MCF 10A (cell line): ENCODE measurements at regions of chr14 and their contacts with region 1.

Region 1: GRCh38 chr14:55270832-55271565 is at the start of gene FBXO34:
- DNase-seq: peak; percentile 99
- H3K4me3 Mint-ChIP-seq: peak within 1 kb of the TSS; percentile 82
- H3K27ac Mint-ChIP-seq: peak within 1 kb of the TSS; percentile 92
- H3K4me1 Mint-ChIP-seq: peaks cover 26% of the 10 kb centered on the region
- H3K27me3 Mint-ChIP-seq: no peaks in the 10 kb centered on the region
- CTCF ChIP-seq: peak; percentile 98
- total RNA-seq, gene FBXO34: 12.0 and 13.7 TPM in 2 replicates

Region 2: GRCh38 chr14:54829455-54830224 is 441.4 kb before region 1 on chr14:
- CTCF ChIA-PET with region 1: no interaction called
- POLR2A ChIA-PET with region 1: no interaction called
- intact Hi-C with region 1: no loop called
- DNase-seq: no peak
- H3K4me3 Mint-ChIP-seq: no peak overlapping the region
- H3K27ac Mint-ChIP-seq: no peak overlapping the region
- H3K4me1 Mint-ChIP-seq: no peaks in the 10 kb centered on the region
- H3K27me3 Mint-ChIP-seq: no peaks in the 10 kb centered on the region
- CTCF ChIP-seq: no peak

Region 3: GRCh38 chr14:55026793-55027561 is 244.0 kb before region 1 on chr14 and contains the starts of genes SOCS4 and WDHD1:
- CTCF ChIA-PET with region 1: no interaction called
- POLR2A ChIA-PET with region 1: no interaction called
- intact Hi-C with region 1: no loop called
- DNase-seq: peak; percentile 93
- H3K4me3 Mint-ChIP-seq: peak within 1 kb of the TSS; percentile 91
- H3K27ac Mint-ChIP-seq: peak within 1 kb of the TSS; percentile 88
- H3K4me1 Mint-ChIP-seq: peaks cover 20% of the 10 kb centered on the region
- H3K27me3 Mint-ChIP-seq: no peaks in the 10 kb centered on the region
- CTCF ChIP-seq: no peak
- total RNA-seq, gene SOCS4: 24.6 and 29.6 TPM in 2 replicates
- total RNA-seq, gene WDHD1: 5.8 and 6.5 TPM in 2 replicates

Region 4: GRCh38 chr14:55160989-55161388 is 110.0 kb before region 1 on chr14:
- CTCF ChIA-PET with region 1: no interaction called
- POLR2A ChIA-PET with region 1: no interaction called
- intact Hi-C with region 1: no loop called
- DNase-seq: peak; percentile 37
- H3K4me3 Mint-ChIP-seq: no peak overlapping the region
- H3K27ac Mint-ChIP-seq: peak overlapping the region; percentile 14
- H3K4me1 Mint-ChIP-seq: peaks cover 6% of the 10 kb centered on the region
- H3K27me3 Mint-ChIP-seq: no peaks in the 10 kb centered on the region
- CTCF ChIP-seq: peak; percentile 46

Region 5: DNA sequence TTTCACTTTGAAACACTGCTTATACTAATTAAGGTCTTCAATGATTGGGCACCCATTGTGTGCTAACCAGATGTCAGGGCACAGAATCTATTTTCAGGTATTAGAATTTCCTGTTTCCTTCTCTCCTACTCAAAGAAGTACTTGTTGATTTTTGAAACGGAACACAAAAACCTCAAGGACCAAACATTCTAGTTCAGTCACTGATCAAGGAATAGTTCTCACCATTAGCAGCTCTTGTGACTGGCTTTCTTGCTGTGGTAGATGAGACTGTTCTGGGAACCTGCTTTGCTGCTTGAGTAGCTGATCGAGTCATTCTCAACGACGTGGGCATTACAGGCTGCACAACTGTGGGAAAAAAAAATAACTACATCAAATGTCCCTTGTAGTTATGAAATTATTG is 90.6 kb before region 1 on chr14:
- CTCF ChIA-PET with region 1: no interaction called
- POLR2A ChIA-PET with region 1: no interaction called
- intact Hi-C with region 1: no loop called
- DNase-seq: no peak
- H3K4me3 Mint-ChIP-seq: no peak overlapping the region
- H3K27ac Mint-ChIP-seq: no peak overlapping the region
- H3K4me1 Mint-ChIP-seq: no peaks in the 10 kb centered on the region
- H3K27me3 Mint-ChIP-seq: no peaks in the 10 kb centered on the region
- CTCF ChIP-seq: no peak

Region 6: GRCh38 chr14:55254581-55254980 is 16.4 kb before region 1 on chr14:
- CTCF ChIA-PET with region 1: interaction called, 16 read pairs
- POLR2A ChIA-PET with region 1: interaction called, 3 read pairs
- intact Hi-C with region 1: no loop called
- DNase-seq: no peak
- H3K4me3 Mint-ChIP-seq: no peak overlapping the region
- H3K27ac Mint-ChIP-seq: no peak overlapping the region
- H3K4me1 Mint-ChIP-seq: no peaks in the 10 kb centered on the region
- H3K27me3 Mint-ChIP-seq: peaks cover 57% of the 10 kb centered on the region
- CTCF ChIP-seq: no peak

Region 7: GRCh38 chr14:55297611-55298441 is 26.8 kb after region 1 on chr14:
- CTCF ChIA-PET with region 1: interaction called, 8 read pairs
- POLR2A ChIA-PET with region 1: interaction called, 11 read pairs
- intact Hi-C with region 1: no loop called
- DNase-seq: peak; percentile 84
- H3K4me3 Mint-ChIP-seq: peak overlapping the region; percentile 66
- H3K27ac Mint-ChIP-seq: peak overlapping the region; percentile 71
- H3K4me1 Mint-ChIP-seq: peaks cover 25% of the 10 kb centered on the region
- H3K27me3 Mint-ChIP-seq: no peaks in the 10 kb centered on the region
- CTCF ChIP-seq: peak; percentile 28

Region 8: DNA sequence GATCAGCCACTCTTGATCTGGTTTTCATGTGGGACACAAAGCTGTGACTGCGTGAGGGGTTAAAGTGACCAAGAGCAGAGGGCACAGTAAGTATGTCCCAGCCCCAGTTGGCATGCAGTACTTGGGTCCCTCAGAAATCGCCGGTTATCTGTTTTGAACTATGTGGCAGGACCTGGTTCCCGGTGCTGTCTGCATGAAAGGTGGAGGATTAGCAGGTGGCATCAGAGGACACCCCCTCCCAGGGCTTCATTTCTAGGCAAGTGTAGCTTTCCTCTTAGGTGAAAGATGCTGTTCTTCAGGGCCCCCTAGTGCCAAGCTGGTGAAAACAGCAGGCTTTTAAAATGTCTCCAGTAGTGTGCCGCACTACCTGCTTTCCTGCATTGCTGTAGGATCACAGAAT is 83.5 kb after region 1 on chr14:
- CTCF ChIA-PET with region 1: interaction called, 36 read pairs
- POLR2A ChIA-PET with region 1: interaction called, 9 read pairs
- intact Hi-C with region 1: loop called (anchors 1 kb)
- DNase-seq: peak; percentile 55
- H3K4me3 Mint-ChIP-seq: no peak overlapping the region
- H3K27ac Mint-ChIP-seq: no peak overlapping the region
- H3K4me1 Mint-ChIP-seq: no peaks in the 10 kb centered on the region
- H3K27me3 Mint-ChIP-seq: no peaks in the 10 kb centered on the region
- CTCF ChIP-seq: peak; percentile 58

Region 9: GRCh38 chr14:55430024-55430690 is 159.2 kb after region 1 on chr14:
- CTCF ChIA-PET with region 1: interaction called, 8 read pairs
- POLR2A ChIA-PET with region 1: interaction called, 4 read pairs
- intact Hi-C with region 1: loop called (anchors 1 kb)
- DNase-seq: peak; percentile 87
- H3K4me3 Mint-ChIP-seq: no peak overlapping the region
- H3K27ac Mint-ChIP-seq: peak overlapping the region; percentile 46
- H3K4me1 Mint-ChIP-seq: peaks cover 16% of the 10 kb centered on the region
- H3K27me3 Mint-ChIP-seq: no peaks in the 10 kb centered on the region
- CTCF ChIP-seq: peak; percentile 42